ENCODE measurements at regions of chr3 and their contacts with region 1.

Region 1: GRCh38 chr3:43223670-43224364 is 62.5 kb upstream of the SNRK start:
- H3K4me3 Mint-ChIP-seq: no peak overlapping the region
- H3K27ac Mint-ChIP-seq: no peak overlapping the region
- H3K4me1 Mint-ChIP-seq: no peaks in the 10 kb centered on the region
- H3K27me3 Mint-ChIP-seq: no peaks in the 10 kb centered on the region

Region 2: DNA sequence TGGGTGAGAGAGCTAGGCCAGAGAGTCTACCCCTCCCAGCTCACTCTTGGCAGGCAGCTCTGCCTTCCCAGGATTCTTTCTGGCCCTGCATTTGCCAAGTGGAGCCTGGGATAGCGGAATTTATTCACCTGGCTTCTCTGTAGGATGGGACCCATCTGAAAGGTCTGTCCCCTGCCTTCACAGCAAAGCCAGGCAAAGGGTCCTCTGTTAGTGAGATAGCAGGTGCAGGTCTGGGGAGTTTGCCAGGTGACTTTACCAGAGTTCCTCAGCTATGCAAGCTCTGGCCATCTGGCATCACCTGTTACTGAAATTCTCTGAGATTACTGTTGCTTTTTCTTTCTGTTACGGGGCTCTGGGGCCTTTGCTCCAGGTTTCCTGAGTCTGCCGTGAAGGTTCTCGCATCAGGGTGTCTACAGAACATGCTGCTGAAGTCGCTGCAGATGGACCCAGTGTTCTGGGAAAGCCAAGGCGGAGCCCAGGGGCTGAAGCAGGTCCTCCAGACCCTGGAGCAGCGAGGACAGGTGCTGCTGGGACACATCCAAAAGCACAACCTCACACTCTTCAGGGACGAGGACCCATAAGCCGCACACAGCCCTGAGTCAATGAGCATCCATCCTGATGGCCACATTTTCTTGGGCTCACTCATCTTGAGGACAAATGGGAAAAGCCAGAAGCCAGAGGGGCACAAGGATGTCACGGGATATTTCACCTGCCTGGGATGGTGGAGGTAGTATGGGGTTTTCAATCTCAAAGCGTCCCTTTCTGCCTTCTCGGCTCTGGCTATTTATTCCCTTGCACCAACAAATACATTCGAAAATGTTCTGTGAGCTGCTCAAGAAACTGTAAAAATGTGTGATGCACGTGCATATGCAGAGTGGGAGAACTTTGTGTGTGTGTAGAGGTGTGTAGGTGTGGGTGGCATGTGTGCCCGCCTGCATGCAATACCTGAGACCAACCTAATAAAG is 167.7 kb before region 1 on chr3:
- intact Hi-C with region 1: no loop called
- H3K4me3 Mint-ChIP-seq: no peak overlapping the region
- H3K27ac Mint-ChIP-seq: no peak overlapping the region
- H3K4me1 Mint-ChIP-seq: no peaks in the 10 kb centered on the region
- H3K27me3 Mint-ChIP-seq: no peaks in the 10 kb centered on the region

Region 3: DNA sequence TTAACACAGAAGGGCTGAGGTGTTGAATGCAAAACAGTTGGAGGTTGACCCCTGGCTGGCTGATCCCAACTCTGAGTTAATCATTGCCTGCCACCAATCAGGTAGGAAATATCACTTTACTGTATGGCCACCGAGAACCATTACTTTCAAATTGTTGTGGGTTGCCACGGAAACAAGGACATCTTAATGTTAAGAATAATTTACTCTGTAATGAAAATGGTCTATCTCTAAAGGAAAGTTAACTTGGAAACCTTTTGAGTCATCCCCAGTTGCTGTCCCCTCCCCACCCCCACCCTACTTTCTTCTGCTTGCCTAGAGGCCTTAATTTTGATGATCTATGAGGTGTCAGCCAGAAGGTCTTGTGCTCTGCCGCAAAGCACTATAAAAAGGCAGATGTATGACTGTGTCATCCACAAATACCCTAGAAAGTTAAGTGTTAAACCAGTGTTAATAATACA is 16.2 kb before region 1 on chr3:
- intact Hi-C with region 1: no loop called
- H3K4me3 Mint-ChIP-seq: no peak overlapping the region
- H3K27ac Mint-ChIP-seq: no peak overlapping the region
- H3K4me1 Mint-ChIP-seq: no peaks in the 10 kb centered on the region
- H3K27me3 Mint-ChIP-seq: no peaks in the 10 kb centered on the region

Region 4: DNA sequence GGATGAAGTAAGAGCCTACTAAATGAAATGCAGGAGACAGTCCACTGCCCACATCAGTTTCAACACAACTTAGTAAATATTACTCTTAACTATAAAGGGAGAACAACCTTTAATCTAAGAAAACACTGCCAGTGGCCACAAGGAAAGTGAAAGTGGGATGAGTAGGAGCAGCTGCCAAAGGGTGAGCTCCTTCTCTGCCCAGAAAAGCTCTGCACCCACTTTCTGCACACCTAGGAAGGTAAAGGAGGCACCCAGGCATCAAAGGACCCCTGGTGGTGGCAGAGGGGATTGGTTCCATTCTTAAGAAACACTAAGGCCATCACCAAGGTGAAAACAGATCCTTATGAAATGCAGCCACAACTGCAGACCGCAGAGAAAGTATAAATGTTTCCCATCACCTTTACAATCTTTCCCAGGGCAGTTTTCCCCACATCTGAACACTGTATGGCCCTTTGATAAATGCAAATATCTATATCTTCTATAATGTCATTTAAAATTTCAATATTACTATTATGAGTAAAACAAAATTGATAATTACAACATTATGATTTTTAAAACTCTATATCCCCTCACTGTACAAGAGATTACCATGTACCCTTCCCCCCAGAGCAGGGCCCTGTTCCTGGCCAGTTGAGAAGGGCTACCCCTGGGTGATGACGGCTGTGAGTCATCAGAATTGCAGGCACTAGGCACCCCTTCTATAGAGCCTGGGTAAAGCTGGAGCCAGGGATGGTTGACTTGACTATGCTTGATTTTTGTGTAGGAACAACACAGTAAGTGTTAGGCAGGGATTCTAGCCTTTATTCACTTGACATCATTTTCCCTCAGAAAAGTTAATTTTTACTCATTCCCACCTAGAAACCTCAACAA is 154.5 kb after region 1 on chr3:
- intact Hi-C with region 1: loop called (anchors 5 kb)
- H3K4me3 Mint-ChIP-seq: no peak overlapping the region
- H3K27ac Mint-ChIP-seq: no peak overlapping the region
- H3K4me1 Mint-ChIP-seq: no peaks in the 10 kb centered on the region
- H3K27me3 Mint-ChIP-seq: no peaks in the 10 kb centered on the region

Region 5: DNA sequence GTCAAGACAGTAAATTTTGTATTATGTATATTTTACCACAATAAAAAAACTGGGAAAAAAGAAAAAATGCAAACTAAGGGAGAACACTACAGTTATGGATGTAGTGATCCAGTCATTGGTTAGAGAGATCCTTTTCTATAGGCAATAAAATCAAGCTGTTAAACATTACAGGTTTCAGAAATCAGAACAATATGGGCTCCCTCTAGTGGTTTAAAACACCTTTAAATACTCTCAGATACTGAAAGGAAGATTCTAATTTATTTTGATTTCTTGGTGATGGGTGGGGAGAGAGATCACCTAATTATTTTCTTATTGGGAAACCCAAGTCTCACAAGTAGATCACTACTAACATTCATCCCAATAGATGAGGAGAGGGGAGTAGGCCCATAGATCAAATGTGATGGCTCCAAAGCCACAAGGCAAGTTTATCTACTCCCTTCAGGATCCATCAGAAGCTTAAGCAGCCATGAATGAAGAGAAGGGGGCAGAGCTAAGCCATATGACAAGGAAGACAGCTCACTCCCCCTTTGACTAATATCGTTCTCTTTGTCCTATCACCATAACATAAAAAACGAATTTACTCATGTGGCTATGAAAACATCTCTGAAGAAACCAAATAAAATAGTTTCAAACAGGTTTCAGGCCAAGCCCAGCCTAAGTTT is 279.4 kb after region 1 on chr3:
- intact Hi-C with region 1: loop called (anchors 2 kb)
- H3K4me3 Mint-ChIP-seq: no peak overlapping the region
- H3K27ac Mint-ChIP-seq: no peak overlapping the region
- H3K4me1 Mint-ChIP-seq: peaks cover 16% of the 10 kb centered on the region
- H3K27me3 Mint-ChIP-seq: no peaks in the 10 kb centered on the region

Measured in dendritic cell treated with granulocyte-macrophage colony-stimulating factor and Interleukin-4, amounts not matched to agents 40 ng/mL and 50 ng/mL, for 4 days (primary cell).